ENCODE measurements at regions of chr7 and their contacts with region 1.

Region 1: DNA sequence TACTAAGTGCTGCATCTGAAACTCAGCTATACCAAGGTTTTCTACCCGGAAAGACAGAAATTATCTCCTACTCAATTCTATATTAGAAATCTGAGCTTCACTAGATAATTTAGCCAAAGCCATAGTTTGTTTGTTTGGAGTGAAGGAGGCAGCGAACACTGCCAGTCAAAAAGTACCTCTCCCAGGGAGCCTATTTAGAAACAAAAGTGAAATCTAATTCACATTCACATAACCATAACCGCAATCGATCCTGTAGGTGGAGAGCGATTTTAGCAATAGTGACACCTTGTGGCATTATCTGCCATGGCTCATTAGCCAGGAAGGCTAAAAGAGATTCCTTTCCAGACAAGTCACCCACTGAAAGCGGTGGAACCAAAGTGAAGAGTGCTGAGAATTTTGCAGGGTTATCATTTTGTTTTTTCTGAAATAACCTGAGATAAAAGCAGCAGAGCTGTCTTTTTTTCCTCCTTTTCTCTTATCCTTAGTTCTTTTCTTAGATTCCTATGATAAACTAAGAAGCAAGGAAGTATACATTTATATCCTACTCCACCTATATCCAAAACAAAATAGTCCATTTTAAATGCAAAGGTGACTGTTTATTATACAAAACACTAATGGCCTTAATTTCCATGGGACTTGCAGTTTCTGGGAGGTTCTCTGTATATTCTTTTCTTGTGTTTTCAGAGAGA is 83.7 kb upstream of the BET1 start:
- DNase-seq: peak; percentile 83
- H3K4me3 ChIP-seq: no peak overlapping the region
- H3K27ac ChIP-seq: no peak overlapping the region
- H3K4me1 ChIP-seq: peaks cover 6% of the 10 kb centered on the region
- H3K27me3 ChIP-seq: peaks cover 5 to 8% of the 10 kb centered on the region in 2 experiments
- CTCF ChIP-seq: peak; percentile 66 to 85
- POLR2A ChIP-seq: no peak

Region 2: DNA sequence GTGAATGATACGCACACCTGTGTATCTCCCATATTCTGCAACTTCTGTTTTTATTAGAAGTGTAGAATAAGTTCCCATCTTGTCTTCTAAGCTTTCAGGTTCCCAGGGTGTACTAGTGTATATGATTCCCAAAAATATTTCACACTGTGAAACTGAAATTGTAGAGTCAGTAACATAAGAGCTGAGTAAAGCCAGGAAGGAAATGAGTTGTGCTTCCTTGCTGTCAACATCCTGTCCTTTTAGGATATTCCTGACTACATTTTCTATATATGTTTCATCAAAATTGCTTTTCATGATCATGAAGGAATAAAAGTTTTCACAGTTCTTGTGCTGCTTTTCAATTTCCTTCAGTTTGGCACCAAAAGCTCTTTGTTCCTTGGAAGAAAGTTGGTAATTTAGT is 954.8 kb before region 1 on chr7:
- CTCF ChIA-PET with region 1: no interaction called
- POLR2A ChIA-PET with region 1: no interaction called
- dilution Hi-C with region 1: no loop called
- intact Hi-C with region 1: no loop called
- DNase-seq: peak; percentile 23
- H3K4me3 ChIP-seq: no peak overlapping the region
- H3K27ac ChIP-seq: peak overlapping the region; percentile 15
- H3K4me1 ChIP-seq: peaks cover 9% of the 10 kb centered on the region
- H3K27me3 ChIP-seq: no peaks in the 10 kb centered on the region
- CTCF ChIP-seq: no peak
- POLR2A ChIP-seq: no peak

Region 3: GRCh38 chr7:93715234-93715633 is 372.6 kb before region 1 on chr7:
- CTCF ChIA-PET with region 1: interaction called, 15 read pairs
- POLR2A ChIA-PET with region 1: no interaction called
- dilution Hi-C with region 1: no loop called
- intact Hi-C with region 1: loop called (anchors 1 kb)
- DNase-seq: peak; percentile 58
- H3K4me3 ChIP-seq: no peak overlapping the region
- H3K27ac ChIP-seq: no peak overlapping the region
- H3K4me1 ChIP-seq: no peaks in the 10 kb centered on the region
- H3K27me3 ChIP-seq: peaks cover 15 to 26% of the 10 kb centered on the region in 2 experiments
- CTCF ChIP-seq: peak; percentile 71 to 72
- POLR2A ChIP-seq: no peak

Region 4: DNA sequence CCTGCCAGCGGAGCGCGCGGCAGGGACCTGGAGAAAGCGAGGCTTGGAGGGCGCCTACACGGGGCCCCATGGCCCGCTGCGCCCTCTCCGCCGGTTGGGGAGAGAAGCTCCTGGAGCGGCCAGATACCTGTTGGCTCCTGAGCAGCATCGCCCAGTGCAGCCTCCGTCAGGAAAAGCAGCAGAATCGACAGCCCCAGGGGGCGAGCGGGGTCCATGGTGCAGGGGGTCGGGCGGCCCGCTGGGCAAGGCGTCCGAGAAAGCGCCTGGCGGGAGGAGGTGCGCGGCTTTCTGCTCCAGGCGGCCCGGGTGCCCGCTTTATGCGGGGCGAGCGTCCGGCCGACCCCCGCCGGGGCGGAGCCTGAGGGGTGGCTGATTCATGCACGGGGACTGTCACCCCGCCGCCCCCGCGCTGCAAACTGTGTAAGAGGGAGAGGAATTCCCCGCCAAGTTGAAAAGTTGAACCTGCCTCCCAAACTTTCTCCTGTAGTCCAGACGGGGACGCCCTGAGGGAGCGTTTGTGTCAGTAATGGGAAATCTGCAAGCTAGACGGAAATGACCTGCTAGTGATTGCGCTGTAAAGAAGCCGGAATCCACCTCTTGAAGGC is 197.2 kb before region 1 on chr7 and contains the start of gene TFPI2:
- CTCF ChIA-PET with region 1: interaction called, 18 read pairs
- POLR2A ChIA-PET with region 1: no interaction called
- dilution Hi-C with region 1: no loop called
- intact Hi-C with region 1: no loop called
- DNase-seq: peak; percentile 62
- H3K4me3 ChIP-seq: peak within 1 kb of the TSS; percentile 63 to 97 (median 82)
- H3K27ac ChIP-seq: no peak within 1 kb of the TSS
- H3K4me1 ChIP-seq: peaks cover 23% of the 10 kb centered on the region
- H3K27me3 ChIP-seq: peaks cover 0 to 3% of the 10 kb centered on the region in 2 experiments
- CTCF ChIP-seq: no peak
- POLR2A ChIP-seq: no peak
- total RNA-seq, gene TFPI2: 33.1 and 65.9 TPM in 2 replicates

Region 5: DNA sequence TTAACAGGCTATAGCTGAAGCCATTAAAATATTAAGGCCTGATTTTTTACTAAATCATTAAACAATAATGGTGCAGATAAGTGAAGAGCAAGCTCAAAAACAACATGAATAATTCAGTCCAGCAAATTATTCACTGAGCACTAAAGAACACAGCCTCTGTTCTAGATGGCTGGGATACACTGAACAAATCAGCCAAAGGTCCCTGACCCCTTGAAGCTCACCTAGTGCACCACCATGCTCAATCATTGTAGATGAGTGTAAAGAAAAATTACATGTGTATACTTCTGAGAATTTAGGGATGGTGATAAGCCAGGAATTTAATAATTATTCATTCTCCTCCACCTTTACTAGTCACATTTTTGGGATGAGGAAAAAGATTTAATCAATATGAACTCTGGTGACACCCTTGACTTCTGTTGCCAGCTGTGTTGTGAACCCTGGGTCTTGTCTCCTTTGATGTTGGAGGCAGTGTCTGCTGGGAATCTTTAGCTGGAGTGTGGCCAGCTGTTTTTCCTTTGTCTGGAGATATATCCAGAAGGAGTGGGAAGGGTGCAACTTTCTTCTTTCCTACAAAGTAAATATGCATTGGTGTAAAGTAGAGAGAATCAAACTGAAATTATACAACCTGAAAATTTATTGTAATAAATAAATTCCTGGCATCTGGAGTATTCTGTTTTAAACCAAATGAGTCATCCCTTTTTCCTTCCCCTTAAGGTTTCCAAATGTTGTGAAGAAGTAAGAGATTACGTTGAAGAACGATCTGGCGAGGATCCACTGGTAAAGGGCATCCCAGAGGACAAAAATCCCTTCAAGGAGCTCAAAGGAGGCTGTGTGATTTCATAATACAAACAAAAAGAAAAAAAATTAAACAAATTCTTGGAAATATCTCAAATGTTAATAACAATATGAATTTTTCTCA is 177.5 kb before region 1 on chr7:
- CTCF ChIA-PET with region 1: interaction called, 11 read pairs
- POLR2A ChIA-PET with region 1: no interaction called
- dilution Hi-C with region 1: no loop called
- intact Hi-C with region 1: no loop called
- DNase-seq: peak; percentile 86
- H3K4me3 ChIP-seq: peak overlapping the region in 1 of 3 experiments; percentile 18
- H3K27ac ChIP-seq: peak overlapping the region; percentile 47
- H3K4me1 ChIP-seq: peaks cover 54% of the 10 kb centered on the region
- H3K27me3 ChIP-seq: no peaks in the 10 kb centered on the region
- CTCF ChIP-seq: no peak
- POLR2A ChIP-seq: no peak

Region 6: DNA sequence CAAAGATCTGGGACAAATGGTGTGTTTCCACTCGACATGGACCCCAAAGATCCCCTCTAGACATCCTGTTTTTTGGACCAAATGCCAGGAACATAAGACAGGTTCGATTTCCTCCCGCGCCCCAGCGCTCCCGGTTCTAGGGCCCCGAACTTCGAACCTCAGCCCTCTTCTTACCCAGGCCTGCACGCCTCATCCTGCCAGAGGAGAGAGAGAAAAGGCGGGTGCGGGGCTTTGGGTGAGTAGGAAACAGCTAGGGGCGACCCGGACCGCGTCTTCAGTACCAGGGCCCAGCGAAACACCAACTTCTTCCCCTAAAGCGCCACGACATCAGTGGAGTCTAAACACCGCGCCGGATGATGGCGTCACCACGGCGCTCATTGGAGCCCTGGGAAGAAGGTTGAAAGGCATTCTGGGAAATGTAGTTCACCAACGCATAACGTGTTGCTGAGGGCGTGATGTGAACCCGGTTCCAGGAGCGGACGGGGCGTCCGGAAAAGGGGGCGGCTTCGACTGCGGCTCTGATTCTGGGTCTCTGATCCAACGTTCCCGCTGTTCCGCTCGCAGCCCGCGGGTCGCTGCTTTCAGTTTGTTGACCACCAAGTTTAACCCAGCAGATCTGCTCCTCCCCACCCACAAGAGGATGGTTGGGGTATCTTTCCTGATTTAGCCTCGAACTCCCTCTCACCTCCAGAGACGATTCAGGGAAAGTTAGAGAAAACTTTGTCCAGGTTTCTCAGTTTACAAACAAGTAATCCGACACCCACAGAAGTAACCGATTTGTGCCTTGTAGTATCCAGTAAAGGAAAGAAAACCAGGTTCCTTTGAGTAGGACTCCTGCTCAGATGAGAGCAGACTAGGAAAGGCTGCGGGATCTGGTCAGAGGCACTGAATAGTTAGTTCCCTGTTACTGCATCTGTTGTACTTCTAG is 83.5 kb before region 1 on chr7 and contains the start of gene BET1:
- CTCF ChIA-PET with region 1: no interaction called
- POLR2A ChIA-PET with region 1: no interaction called
- dilution Hi-C with region 1: no loop called
- intact Hi-C with region 1: loop called (anchors 5 kb)
- DNase-seq: peak; percentile 96
- H3K4me3 ChIP-seq: peak within 1 kb of the TSS; percentile 85 to 95 (median 87)
- H3K27ac ChIP-seq: peak within 1 kb of the TSS; percentile 76
- H3K4me1 ChIP-seq: peaks cover 16% of the 10 kb centered on the region
- H3K27me3 ChIP-seq: peaks cover 10 to 23% of the 10 kb centered on the region in 2 experiments
- CTCF ChIP-seq: no peak
- POLR2A ChIP-seq: peak; percentile 66
- total RNA-seq, gene BET1: 23.9 and 28.4 TPM in 2 replicates

Region 7: DNA sequence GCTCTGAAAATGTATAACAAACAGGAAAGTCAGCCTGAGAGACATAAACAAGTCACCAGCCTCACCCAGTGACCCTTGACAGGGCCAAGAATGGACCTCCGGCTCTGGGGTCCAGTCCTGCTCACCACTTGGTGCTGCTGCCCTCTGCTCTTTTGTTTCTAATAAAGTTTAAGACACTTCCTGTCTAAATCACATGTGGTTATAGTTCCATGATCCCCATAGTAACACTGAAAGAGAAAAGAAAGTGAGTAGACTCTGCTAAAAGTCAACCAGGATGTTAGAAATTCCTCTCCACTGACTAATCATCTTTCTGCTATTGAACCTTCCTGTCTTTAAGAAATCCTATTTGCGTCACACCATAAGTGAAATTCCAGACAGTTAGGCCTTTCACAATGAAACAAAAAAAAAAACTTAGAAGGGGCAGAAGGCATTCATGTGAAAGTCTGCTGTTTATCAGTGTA is 95.5 kb after region 1 on chr7:
- CTCF ChIA-PET with region 1: interaction called, 4 read pairs
- POLR2A ChIA-PET with region 1: no interaction called
- dilution Hi-C with region 1: no loop called
- intact Hi-C with region 1: loop called (anchors 2 kb)
- DNase-seq: peak; percentile 99
- H3K4me3 ChIP-seq: no peak overlapping the region
- H3K27ac ChIP-seq: peak overlapping the region; percentile 98
- H3K4me1 ChIP-seq: peaks cover 49% of the 10 kb centered on the region
- H3K27me3 ChIP-seq: no peaks in the 10 kb centered on the region
- CTCF ChIP-seq: no peak
- POLR2A ChIP-seq: no peak

Region 8: DNA sequence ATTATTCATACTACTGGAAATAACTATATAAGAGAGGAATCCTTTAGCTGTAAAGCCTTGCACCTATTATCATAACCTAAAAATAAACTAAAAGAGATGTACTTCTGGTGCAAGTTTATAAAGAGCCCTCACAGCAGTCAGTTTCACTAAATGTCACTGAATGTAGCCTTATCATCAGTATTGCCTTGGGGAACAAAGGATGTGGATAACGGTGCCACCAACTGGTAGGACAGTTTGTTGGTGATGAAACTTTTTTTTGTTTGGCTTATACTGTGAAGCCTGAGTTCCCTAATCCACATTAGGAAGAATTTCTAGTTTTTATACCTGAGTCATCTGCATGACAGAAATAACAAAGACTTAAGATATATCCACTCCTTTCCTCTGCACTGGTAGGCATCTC is 189.0 kb after region 1 on chr7:
- CTCF ChIA-PET with region 1: interaction called, 4 read pairs
- POLR2A ChIA-PET with region 1: no interaction called
- dilution Hi-C with region 1: no loop called
- intact Hi-C with region 1: loop called (anchors 1 kb)
- DNase-seq: peak; percentile 57
- H3K4me3 ChIP-seq: no peak overlapping the region
- H3K27ac ChIP-seq: no peak overlapping the region
- H3K4me1 ChIP-seq: no peaks in the 10 kb centered on the region
- H3K27me3 ChIP-seq: no peaks in the 10 kb centered on the region
- CTCF ChIP-seq: peak; percentile 25 to 29
- POLR2A ChIP-seq: no peak

Measured in endothelial cell of umbilical vein (primary cell).